AG04449 (cell line): ENCODE measurements at regions of chr17 and their contacts with region 1.

Region 1: DNA sequence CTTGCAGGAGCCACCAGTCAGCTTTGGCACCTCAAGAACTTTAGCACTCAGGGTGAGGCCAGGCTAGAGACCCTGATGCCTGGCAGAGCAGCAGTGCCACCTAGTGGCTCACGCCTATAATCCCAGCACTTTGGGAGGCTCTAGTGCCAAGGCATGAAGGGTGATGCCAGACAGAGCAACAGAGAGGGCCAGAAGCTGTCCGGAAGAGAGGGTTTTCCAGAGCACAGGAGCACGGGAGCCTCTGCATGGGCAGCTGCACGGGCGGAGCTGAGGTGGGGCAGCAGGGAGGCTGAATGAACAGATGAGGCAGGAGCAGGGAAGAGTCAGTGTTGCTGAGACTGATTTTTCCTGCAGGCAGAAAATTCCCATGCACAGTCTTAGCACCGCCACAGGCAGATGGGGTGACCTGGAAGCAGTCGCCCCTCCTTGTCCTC is 38.9 kb downstream of the MYH3 start:
- DNase-seq: no peak
- H3K4me3 ChIP-seq: no peak overlapping the region
- CTCF ChIP-seq: peak; percentile 92

Region 2: DNA sequence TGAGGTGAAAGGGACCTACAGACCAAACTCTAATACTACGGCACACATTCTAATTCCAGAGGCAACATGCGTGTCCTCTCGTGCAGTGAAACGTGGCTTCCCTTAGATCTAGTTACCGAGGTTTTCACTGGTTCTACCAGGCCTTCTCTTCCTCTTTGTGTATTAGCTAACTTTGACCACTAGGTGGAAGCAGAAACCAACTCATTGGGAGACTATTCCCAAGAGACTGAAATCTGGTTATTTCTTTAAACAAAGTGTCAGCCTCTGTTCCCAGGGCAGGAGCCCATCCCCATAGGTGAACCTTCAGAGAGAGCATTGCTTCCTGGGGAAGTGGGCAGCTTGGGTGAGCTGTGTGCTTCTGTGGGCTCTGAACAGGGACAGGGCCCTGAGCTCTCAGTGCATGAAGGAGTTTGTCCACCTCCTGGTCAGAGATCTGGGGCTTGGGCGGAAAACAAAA is 693.5 kb before region 1 on chr17:
- CTCF ChIA-PET with region 1: interaction called, 124 read pairs
- POLR2A ChIA-PET with region 1: no interaction called
- DNase-seq: no peak
- H3K4me3 ChIP-seq: no peak overlapping the region
- CTCF ChIP-seq: peak; percentile 61

Region 3: DNA sequence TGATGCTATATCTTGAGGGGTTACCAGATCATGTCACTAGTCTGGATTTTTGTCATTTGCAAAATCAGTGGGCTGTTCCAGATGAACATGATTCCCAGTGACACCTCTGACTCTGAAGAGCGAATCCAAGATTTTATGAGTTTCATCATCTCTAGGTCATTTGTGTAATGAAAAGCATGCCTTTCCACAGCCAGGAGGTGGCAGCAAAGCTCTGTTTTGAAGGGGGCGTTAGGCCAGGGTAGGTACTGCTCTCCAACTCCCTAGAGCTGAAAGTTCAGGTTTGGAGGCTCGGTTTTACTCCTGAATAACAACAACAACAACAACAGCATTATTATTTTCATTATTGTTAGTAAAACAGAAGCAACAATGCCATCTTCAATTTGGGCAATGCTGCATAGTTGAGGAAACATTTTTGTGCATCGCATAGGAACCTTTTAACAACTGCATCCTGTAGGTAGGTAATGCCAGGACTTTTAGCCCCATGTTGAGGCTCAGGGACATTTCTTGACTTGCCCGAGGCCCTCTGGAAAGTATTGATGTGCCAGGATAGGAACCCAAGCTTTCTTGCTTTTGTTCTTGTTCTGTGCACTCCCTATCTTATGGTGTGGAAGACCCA is 322.4 kb before region 1 on chr17:
- CTCF ChIA-PET with region 1: interaction called, 300 read pairs
- POLR2A ChIA-PET with region 1: no interaction called
- DNase-seq: no peak
- H3K4me3 ChIP-seq: no peak overlapping the region
- CTCF ChIP-seq: peak; percentile 74

Region 4: GRCh38 chr17:10316801-10317542 is 301.2 kb before region 1 on chr17:
- CTCF ChIA-PET with region 1: interaction called, 128 read pairs
- POLR2A ChIA-PET with region 1: no interaction called
- DNase-seq: no peak
- H3K4me3 ChIP-seq: no peak overlapping the region
- CTCF ChIP-seq: peak; percentile 69

Region 5: DNA sequence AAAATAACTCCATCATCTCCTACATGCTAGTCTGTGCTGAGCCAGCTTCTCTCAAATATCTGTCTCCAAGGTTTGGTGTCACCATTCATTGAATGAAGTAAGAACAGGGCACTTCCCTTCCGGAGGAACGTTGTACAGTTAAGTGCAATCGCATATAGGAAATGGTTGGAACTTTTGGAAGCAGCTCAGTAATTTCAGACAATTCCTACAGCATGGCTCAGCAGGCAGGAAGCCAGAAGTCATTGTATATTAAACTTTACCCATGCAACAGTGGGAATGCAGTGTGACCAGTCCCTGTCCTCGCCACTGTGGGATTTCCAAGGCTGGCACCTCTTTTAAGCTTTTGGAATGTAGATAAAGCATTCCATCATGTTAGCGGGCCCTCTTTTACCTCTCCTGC is 17.6 kb before region 1 on chr17:
- CTCF ChIA-PET with region 1: interaction called, 139 read pairs
- POLR2A ChIA-PET with region 1: interaction called, 4 read pairs
- DNase-seq: no peak
- H3K4me3 ChIP-seq: no peak overlapping the region
- CTCF ChIP-seq: no peak

Region 6: DNA sequence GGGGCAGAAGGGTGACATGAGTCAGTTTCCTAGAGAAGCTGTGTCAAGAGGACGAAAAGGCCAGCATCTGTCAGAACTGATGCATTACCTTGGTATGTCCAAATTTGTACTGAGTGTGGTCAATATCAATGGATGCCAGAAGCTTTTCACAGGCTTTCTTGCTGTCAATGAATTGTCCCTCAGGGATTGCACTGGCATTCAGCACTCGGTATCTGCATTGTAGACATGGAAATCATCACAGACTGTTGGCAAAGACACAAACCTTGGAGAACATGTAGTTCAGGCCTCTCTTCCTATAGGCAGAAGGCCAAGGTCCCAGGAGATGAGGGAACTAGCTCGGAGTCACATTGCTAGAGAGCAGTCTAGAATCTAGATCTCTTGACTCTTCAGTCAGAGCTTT is 22.3 kb after region 1 on chr17:
- CTCF ChIA-PET with region 1: interaction called, 15 read pairs
- POLR2A ChIA-PET with region 1: no interaction called
- DNase-seq: no peak
- H3K4me3 ChIP-seq: no peak overlapping the region
- CTCF ChIP-seq: no peak